Dendritic cell treated with granulocyte-macrophage colony-stimulating factor and Interleukin-4, amounts not matched to agents 40 ng/mL and 50 ng/mL, for 4 days (primary cell): ENCODE measurements at regions of chr3 and their contacts with region 1.

Region 1: GRCh38 chr3:98573181-98573728 is 20.2 kb downstream of the CPOX start:
- H3K4me3 Mint-ChIP-seq: no peak overlapping the region
- H3K27ac Mint-ChIP-seq: no peak overlapping the region
- H3K4me1 Mint-ChIP-seq: peaks cover 16% of the 10 kb centered on the region
- H3K27me3 Mint-ChIP-seq: no peaks in the 10 kb centered on the region

Region 2: GRCh38 chr3:98343647-98344507 is 229.4 kb before region 1 on chr3:
- intact Hi-C with region 1: loop called (anchors 5 kb)
- H3K4me3 Mint-ChIP-seq: no peak overlapping the region
- H3K27ac Mint-ChIP-seq: no peak overlapping the region
- H3K4me1 Mint-ChIP-seq: no peaks in the 10 kb centered on the region
- H3K27me3 Mint-ChIP-seq: peaks cover 4% of the 10 kb centered on the region

Region 3: DNA sequence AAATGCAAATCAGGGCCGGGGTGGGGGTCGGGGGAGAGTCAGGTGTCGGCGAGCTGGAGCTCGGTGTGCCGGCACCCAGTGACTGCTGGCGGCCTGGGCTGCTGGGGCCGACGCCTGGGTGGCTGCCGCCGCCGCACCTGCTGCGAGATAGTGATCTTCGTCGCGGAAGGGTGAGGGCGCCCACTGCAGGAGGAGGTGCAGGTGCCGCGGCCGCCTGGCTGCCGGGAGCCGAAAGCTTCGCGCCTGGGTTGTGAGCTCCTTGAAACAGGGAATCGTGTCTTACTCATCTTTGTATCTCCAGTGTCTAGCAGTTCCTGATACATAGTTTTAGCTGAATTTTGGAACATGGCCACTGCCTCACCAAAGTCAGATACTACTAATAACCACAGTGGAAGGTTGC is 84.2 kb after region 1 on chr3:
- intact Hi-C with region 1: no loop called
- H3K4me3 Mint-ChIP-seq: no peak overlapping the region
- H3K27ac Mint-ChIP-seq: no peak overlapping the region
- H3K4me1 Mint-ChIP-seq: peaks cover 7% of the 10 kb centered on the region
- H3K27me3 Mint-ChIP-seq: peaks cover 10% of the 10 kb centered on the region